CD14-positive monocyte (primary cell): ENCODE measurements at regions of chr5 and their contacts with region 1.

Region 1: GRCh38 chr5:172420240-172420943 is 33.9 kb downstream of the SH3PXD2B start:
- DNase-seq: peak in 1 of 3 donors; percentile 43
- H3K4me3 ChIP-seq: peak overlapping the region in 1 of 3 experiments; percentile 19
- H3K4me3 Mint-ChIP-seq: peak overlapping the region in 1 of 2 donors; percentile 83
- H3K27ac ChIP-seq: peak overlapping the region in 1 of 2 donors; percentile 17
- H3K27ac Mint-ChIP-seq: peak overlapping the region in 5 of 7 donors; percentile 38 to 85 (median 70)
- H3K4me1 ChIP-seq: peaks cover 24 to 34% of the 10 kb centered on the region in 2 donors
- H3K4me1 Mint-ChIP-seq: peaks cover 41% of the 10 kb centered on the region
- H3K27me3 ChIP-seq: no peaks in the 10 kb centered on the region
- H3K27me3 Mint-ChIP-seq: peaks cover 7 to 8% (median 8%) of the 10 kb centered on the region in 3 donors
- CTCF ChIP-seq: no peak

Region 2: GRCh38 chr5:172454358-172455086 is 34.1 kb after region 1 on chr5 and contains the start of gene SH3PXD2B:
- intact Hi-C with region 1: loop called in 1 of 2 experiments (anchors 5 kb)
- DNase-seq: peak in 1 of 3 donors; percentile 23
- H3K4me3 ChIP-seq: peak within 1 kb of the TSS; percentile 23 to 63 (median 39)
- H3K4me3 Mint-ChIP-seq: peak within 1 kb of the TSS; percentile 82 to 92
- H3K27ac ChIP-seq: no peak within 1 kb of the TSS
- H3K27ac Mint-ChIP-seq: peak within 1 kb of the TSS in 3 of 7 donors; percentile 3 to 83 (median 61)
- H3K4me1 ChIP-seq: peaks cover 9 to 12% of the 10 kb centered on the region in 2 donors
- H3K4me1 Mint-ChIP-seq: peaks cover 22% of the 10 kb centered on the region
- H3K27me3 ChIP-seq: peaks cover 26 to 44% of the 10 kb centered on the region in 2 donors
- H3K27me3 Mint-ChIP-seq: peaks cover 45 to 55% (median 52%) of the 10 kb centered on the region in 3 donors
- CTCF ChIP-seq: no peak
- polyA plus RNA-seq, gene SH3PXD2B: 0.19 to 0.77 (median 0.31) TPM

Region 3: GRCh38 chr5:173352366-173353349 is 932.3 kb after region 1 on chr5:
- intact Hi-C with region 1: no loop called
- DNase-seq: no peak
- H3K4me3 ChIP-seq: no peak overlapping the region
- H3K4me3 Mint-ChIP-seq: no peak overlapping the region
- H3K27ac ChIP-seq: no peak overlapping the region
- H3K27ac Mint-ChIP-seq: no peak overlapping the region
- H3K4me1 ChIP-seq: no peaks in the 10 kb centered on the region
- H3K4me1 Mint-ChIP-seq: no peaks in the 10 kb centered on the region
- H3K27me3 ChIP-seq: peaks cover 5 to 10% of the 10 kb centered on the region in 2 donors
- H3K27me3 Mint-ChIP-seq: peaks cover 6 to 32% (median 12%) of the 10 kb centered on the region in 3 donors
- CTCF ChIP-seq: no peak